ENCODE measurements at regions of chr3 and their contacts with region 1.

Region 1: GRCh38 chr3:47824541-47825473 is 21.9 kb downstream of the DHX30 start:
- DNase-seq: peak; percentile 55 to 92 (median 74)
- ATAC-seq: peak; percentile 98
- H3K4me3 ChIP-seq: peak overlapping the region; percentile 97
- H3K4me3 Mint-ChIP-seq: peak overlapping the region; percentile 90
- H3K27ac ChIP-seq: peak overlapping the region; percentile 60 to 72
- H3K27ac Mint-ChIP-seq: peak overlapping the region; percentile 82
- H3K4me1 ChIP-seq: peaks cover 32% of the 10 kb centered on the region
- H3K4me1 Mint-ChIP-seq: peaks cover 35% of the 10 kb centered on the region
- H3K27me3 ChIP-seq: no peaks in the 10 kb centered on the region
- H3K27me3 Mint-ChIP-seq: no peaks in the 10 kb centered on the region
- CTCF ChIP-seq: peak; percentile 88

Region 2: GRCh38 chr3:47282424-47283192 is 542.2 kb before region 1 on chr3 and contains the starts of genes KIF9 and KLHL18:
- CTCF ChIA-PET with region 1: no interaction called
- POLR2A ChIA-PET with region 1: no interaction called
- intact Hi-C with region 1: loop called in 1 of 2 experiments (anchors 10 kb)
- DNase-seq: peak; percentile 92 to 99 (median 95)
- ATAC-seq: peak; percentile 83
- H3K4me3 ChIP-seq: peak within 1 kb of the TSS; percentile 78
- H3K4me3 Mint-ChIP-seq: peak within 1 kb of the TSS; percentile 98
- H3K27ac ChIP-seq: peak within 1 kb of the TSS; percentile 95 to 98
- H3K27ac Mint-ChIP-seq: peak within 1 kb of the TSS; percentile 99
- H3K4me1 ChIP-seq: peaks cover 45% of the 10 kb centered on the region
- H3K4me1 Mint-ChIP-seq: peaks cover 42% of the 10 kb centered on the region
- H3K27me3 ChIP-seq: no peaks in the 10 kb centered on the region
- H3K27me3 Mint-ChIP-seq: no peaks in the 10 kb centered on the region
- CTCF ChIP-seq: no peak
- total RNA-seq, gene KIF9: 8.0 to 9.2 TPM
- total RNA-seq, gene KLHL18: 43.3 to 43.7 TPM

Region 3: DNA sequence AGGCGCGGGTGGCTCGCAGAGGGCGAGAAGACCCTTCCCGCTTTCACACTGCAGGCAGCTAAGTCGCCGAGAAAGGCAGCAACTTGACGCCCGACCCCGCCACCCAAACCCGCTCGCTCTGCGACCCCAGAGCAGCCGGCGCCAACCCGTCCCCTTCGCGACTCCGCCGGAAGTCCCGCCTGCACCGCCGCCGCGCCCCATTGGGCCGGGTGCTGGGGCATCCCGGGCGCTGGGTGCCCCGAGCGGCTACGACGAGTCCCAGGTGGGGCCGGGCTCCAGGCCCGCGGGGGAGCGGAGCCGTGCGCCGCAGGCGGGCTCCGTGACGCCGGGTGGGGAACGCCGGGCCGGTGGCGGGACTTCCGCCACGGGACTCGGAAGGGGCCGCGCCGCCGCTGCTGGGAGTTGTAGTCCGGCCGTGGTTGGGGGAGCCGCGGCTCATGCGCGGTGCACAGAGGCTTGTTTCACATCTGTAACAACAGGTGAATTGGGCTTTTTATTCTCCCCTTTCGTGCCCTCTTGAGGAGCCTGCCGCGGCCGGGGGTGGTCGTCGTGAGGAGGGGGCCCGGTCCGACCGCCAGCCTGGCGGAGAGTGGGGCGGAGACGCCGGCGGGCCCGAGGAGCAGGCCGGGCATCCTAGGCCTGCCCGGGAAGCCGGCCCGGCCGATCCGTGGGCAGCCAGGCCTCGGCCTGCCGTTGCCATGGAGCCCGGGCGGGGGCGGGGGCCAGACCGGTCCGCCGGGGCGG is 21.9 kb before region 1 on chr3 and contains the start of gene DHX30:
- CTCF ChIA-PET with region 1: interaction called, 8 read pairs
- POLR2A ChIA-PET with region 1: interaction called, 13 read pairs
- intact Hi-C with region 1: loop called in 1 of 2 experiments (anchors 2 kb)
- DNase-seq: peak; percentile 63 to 94 (median 80)
- ATAC-seq: peak; percentile 90
- H3K4me3 ChIP-seq: peak within 1 kb of the TSS; percentile 98
- H3K4me3 Mint-ChIP-seq: peak within 1 kb of the TSS; percentile 97
- H3K27ac ChIP-seq: peak within 1 kb of the TSS; percentile 83 to 85
- H3K27ac Mint-ChIP-seq: peak within 1 kb of the TSS; percentile 96
- H3K4me1 ChIP-seq: peaks cover 26% of the 10 kb centered on the region
- H3K4me1 Mint-ChIP-seq: peaks cover 20% of the 10 kb centered on the region
- H3K27me3 ChIP-seq: no peaks in the 10 kb centered on the region
- H3K27me3 Mint-ChIP-seq: no peaks in the 10 kb centered on the region
- CTCF ChIP-seq: no peak
- total RNA-seq, gene DHX30: 75.1 to 75.6 TPM

Region 4: GRCh38 chr3:47813551-47814177 is 11.1 kb before region 1 on chr3:
- CTCF ChIA-PET with region 1: interaction called, 11 read pairs
- POLR2A ChIA-PET with region 1: interaction called, 8 read pairs
- intact Hi-C with region 1: no loop called
- DNase-seq: no peak
- ATAC-seq: no peak
- H3K4me3 ChIP-seq: no peak overlapping the region
- H3K4me3 Mint-ChIP-seq: no peak overlapping the region
- H3K27ac ChIP-seq: no peak overlapping the region
- H3K27ac Mint-ChIP-seq: no peak overlapping the region
- H3K4me1 ChIP-seq: no peaks in the 10 kb centered on the region
- H3K4me1 Mint-ChIP-seq: peaks cover 19% of the 10 kb centered on the region
- H3K27me3 ChIP-seq: no peaks in the 10 kb centered on the region
- H3K27me3 Mint-ChIP-seq: no peaks in the 10 kb centered on the region
- CTCF ChIP-seq: no peak

Region 5: DNA sequence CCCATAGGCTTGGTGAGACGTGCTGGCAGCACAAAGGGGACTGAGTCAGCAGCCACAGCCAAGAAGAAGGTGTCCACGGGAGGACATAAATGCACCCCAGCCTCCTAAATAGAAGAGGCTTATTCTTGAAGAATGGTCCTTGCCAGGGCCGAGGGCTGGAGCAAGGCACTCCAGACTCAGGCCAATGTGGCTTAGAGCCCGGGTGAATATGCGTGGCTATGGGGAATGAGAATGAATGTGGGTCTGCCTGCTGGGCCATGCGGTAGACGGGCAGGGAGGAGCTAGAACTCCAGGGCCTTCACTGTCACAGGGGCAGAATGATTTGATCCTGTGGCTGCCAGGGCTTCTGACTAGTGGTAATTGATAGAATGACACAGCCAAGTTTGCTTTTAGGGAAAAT is 12.2 kb after region 1 on chr3:
- CTCF ChIA-PET with region 1: interaction called, 14 read pairs
- POLR2A ChIA-PET with region 1: interaction called, 4 read pairs
- intact Hi-C with region 1: no loop called
- DNase-seq: no peak
- ATAC-seq: no peak
- H3K4me3 ChIP-seq: no peak overlapping the region
- H3K4me3 Mint-ChIP-seq: no peak overlapping the region
- H3K27ac ChIP-seq: no peak overlapping the region
- H3K27ac Mint-ChIP-seq: no peak overlapping the region
- H3K4me1 ChIP-seq: peaks cover 4% of the 10 kb centered on the region
- H3K4me1 Mint-ChIP-seq: peaks cover 4% of the 10 kb centered on the region
- H3K27me3 ChIP-seq: no peaks in the 10 kb centered on the region
- H3K27me3 Mint-ChIP-seq: no peaks in the 10 kb centered on the region
- CTCF ChIP-seq: no peak

Region 6: DNA sequence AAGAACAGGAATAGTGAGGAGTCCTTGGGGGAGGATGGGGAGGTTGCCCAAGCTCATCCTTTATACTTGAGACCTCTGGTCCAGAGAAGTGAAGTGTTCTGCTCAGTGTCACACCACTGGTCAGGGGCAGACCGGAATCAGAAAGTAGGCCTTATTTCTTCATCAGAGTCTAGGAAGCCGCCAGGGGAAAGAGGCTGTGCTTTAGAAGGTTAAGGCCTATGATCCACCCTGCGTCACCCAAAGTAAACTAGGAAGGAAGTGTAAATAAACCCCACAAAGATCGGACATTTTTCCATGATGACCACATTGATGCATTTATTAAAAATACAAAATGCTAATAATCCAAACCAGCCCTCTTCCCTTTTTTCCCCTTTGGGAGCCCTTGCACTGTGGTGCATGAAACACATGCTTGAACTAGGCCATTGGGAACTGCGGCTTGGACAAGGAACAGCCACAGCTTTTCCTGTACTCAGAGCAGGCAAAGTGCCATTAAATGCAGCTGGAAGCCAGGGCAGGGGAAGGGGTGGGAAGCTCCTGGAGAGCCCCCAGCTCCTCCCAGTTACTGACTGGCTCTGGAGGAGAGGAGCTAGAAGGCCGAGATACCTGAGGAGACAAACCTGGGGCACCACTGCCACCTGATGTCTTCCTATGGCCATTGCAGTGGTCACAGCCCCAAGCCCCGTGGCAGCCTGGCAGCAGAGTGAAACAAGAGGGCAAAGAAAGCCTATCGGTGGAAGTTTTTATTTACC is 326.4 kb after region 1 on chr3:
- CTCF ChIA-PET with region 1: no interaction called
- POLR2A ChIA-PET with region 1: no interaction called
- intact Hi-C with region 1: loop called (anchors 1 to 5 kb)
- DNase-seq: peak; percentile 19 to 70 (median 36)
- ATAC-seq: peak; percentile 79
- H3K4me3 ChIP-seq: no peak overlapping the region
- H3K4me3 Mint-ChIP-seq: no peak overlapping the region
- H3K27ac ChIP-seq: no peak overlapping the region
- H3K27ac Mint-ChIP-seq: no peak overlapping the region
- H3K4me1 ChIP-seq: no peaks in the 10 kb centered on the region
- H3K4me1 Mint-ChIP-seq: no peaks in the 10 kb centered on the region
- H3K27me3 ChIP-seq: no peaks in the 10 kb centered on the region
- H3K27me3 Mint-ChIP-seq: no peaks in the 10 kb centered on the region
- CTCF ChIP-seq: peak; percentile 46

Measured in CD4-positive, alpha-beta T cell (primary cell).